Ascending aorta (tissue), 2 donors: ENCODE measurements at regions of chr2 and their contacts with region 1.

Region 1: GRCh38 chr2:197705121-197705911 is at the start of gene MARS2:
- DNase-seq: peak; percentile 62 to 95
- H3K4me3 ChIP-seq: peak within 1 kb of the TSS; percentile 73 to 84
- H3K27ac ChIP-seq: peak within 1 kb of the TSS; percentile 67 to 81
- H3K4me1 ChIP-seq: peaks cover 10 to 21% of the 10 kb centered on the region in 2 donors
- H3K27me3 ChIP-seq: no peaks in the 10 kb centered on the region
- CTCF ChIP-seq: no peak
- total RNA-seq, gene MARS2: 6.5 TPM

Region 2: DNA sequence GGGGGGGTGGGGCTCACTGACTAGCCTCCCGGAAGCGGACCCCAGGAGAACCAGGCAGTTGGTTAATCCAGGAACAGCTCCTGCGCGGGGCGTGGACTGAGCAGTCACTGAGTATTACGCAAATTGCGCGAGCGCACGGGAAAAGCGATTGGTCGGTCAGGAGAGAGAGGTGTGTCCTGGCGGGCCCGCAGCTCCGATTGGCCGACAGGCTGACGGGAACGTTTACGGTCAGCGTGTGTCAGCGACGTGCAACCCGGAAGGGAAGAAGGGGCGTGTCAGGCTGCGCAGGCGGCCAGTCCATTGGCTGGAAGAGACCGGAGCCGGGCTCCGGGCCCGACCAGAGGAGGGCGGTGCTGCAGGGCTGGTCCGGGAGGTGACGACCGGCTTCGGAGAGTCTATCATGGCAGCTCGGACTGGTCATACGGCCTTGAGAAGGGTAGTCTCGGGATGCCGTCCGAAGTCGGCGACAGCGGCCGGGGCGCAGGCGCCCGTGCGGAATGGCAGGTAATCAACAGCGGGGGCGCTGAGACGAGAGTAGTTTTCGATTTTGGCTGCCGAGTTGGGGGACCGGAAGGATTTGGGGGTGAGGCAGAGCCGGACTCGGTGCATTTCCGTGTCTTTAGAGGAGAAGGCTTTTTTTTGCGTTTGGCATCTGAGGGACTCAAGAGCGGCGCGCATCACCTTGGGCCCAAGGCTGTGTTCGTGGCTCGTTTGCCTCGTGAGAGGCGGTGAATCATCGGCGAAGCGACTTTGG is 252.0 kb before region 1 on chr2 and contains the start of gene COQ10B:
- intact Hi-C with region 1: loop called (anchors 1 kb)
- DNase-seq: peak; percentile 98 to 100
- H3K4me3 ChIP-seq: peak within 1 kb of the TSS; percentile 60 to 83
- H3K27ac ChIP-seq: peak within 1 kb of the TSS; percentile 96 to 99
- H3K4me1 ChIP-seq: peaks cover 9 to 19% of the 10 kb centered on the region in 2 donors
- H3K27me3 ChIP-seq: no peaks in the 10 kb centered on the region
- CTCF ChIP-seq: peak in 2 of 3 experiments; percentile 15 to 25
- total RNA-seq, gene COQ10B: 6.0 TPM

Region 3: GRCh38 chr2:197464175-197464574 is 241.1 kb before region 1 on chr2:
- intact Hi-C with region 1: no loop called
- DNase-seq: no peak
- H3K4me3 ChIP-seq: no peak overlapping the region
- H3K27ac ChIP-seq: no peak overlapping the region
- H3K4me1 ChIP-seq: no peaks in the 10 kb centered on the region
- H3K27me3 ChIP-seq: no peaks in the 10 kb centered on the region
- CTCF ChIP-seq: no peak

Region 4: DNA sequence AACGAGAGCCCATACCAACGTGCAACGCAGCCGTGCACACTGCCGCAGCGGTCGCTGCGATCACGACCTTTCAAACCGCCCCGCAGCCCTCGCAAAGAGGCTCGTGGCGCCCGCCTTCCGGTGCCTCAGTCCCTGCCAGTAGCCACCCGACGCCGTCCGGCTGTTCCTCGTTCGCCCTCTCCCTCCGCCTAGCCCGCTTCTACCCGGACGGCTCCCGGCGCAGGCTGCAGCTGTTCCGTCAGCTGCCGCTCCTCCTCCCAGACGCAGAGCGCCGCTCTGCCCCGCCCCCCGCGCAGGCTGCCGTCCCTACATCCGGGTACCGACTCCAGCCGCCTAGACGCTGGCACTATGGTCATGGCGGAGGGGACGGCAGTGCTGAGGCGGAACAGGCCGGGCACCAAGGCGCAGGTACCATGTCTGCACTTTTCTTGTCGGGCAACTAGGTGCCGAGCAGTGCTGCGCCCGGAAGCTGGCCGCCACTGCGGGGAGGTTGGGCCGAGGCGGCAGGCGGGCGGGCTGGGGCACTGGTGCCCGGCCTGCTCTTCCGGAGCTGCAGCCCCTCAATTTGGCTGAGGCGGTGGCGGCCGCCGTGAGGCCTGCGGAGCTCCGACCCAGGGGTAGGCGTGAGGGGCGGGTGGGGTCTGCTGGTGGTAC is 189.4 kb before region 1 on chr2 and contains the start of gene MOB4:
- intact Hi-C with region 1: loop called (anchors 2 kb)
- DNase-seq: peak; percentile 72 to 97
- H3K4me3 ChIP-seq: peak within 1 kb of the TSS; percentile 77 to 84
- H3K27ac ChIP-seq: peak within 1 kb of the TSS; percentile 84 to 95
- H3K4me1 ChIP-seq: peaks cover 0 to 7% of the 10 kb centered on the region in 2 donors
- H3K27me3 ChIP-seq: no peaks in the 10 kb centered on the region
- CTCF ChIP-seq: peak in 1 of 3 experiments; percentile 4
- total RNA-seq, gene MOB4: 29.2 TPM

Region 5: GRCh38 chr2:197777823-197778407 is 72.6 kb after region 1 on chr2:
- intact Hi-C with region 1: loop called (anchors 2 kb)
- DNase-seq: no peak
- H3K4me3 ChIP-seq: no peak overlapping the region
- H3K27ac ChIP-seq: peak overlapping the region in 1 of 2 donors; percentile 9
- H3K4me1 ChIP-seq: peaks cover 0 to 14% of the 10 kb centered on the region in 2 donors
- H3K27me3 ChIP-seq: no peaks in the 10 kb centered on the region
- CTCF ChIP-seq: peak; percentile 59 to 80 (median 75)

Region 6: GRCh38 chr2:198296665-198297308 is 591.5 kb after region 1 on chr2:
- intact Hi-C with region 1: loop called (anchors 2 kb)
- DNase-seq: peak in 1 of 2 donors; percentile 71
- H3K4me3 ChIP-seq: no peak overlapping the region
- H3K27ac ChIP-seq: no peak overlapping the region
- H3K4me1 ChIP-seq: no peaks in the 10 kb centered on the region
- H3K27me3 ChIP-seq: no peaks in the 10 kb centered on the region
- CTCF ChIP-seq: peak; percentile 60 to 88 (median 77)

Region 7: GRCh38 chr2:199459286-199460016 is 1754.1 kb after region 1 on chr2:
- intact Hi-C with region 1: loop called (anchors 10 kb)
- DNase-seq: peak in 1 of 2 donors; percentile 95
- H3K4me3 ChIP-seq: peak overlapping the region; percentile 87 to 98
- H3K27ac ChIP-seq: peak overlapping the region; percentile 85 to 93
- H3K4me1 ChIP-seq: peaks cover 27 to 31% of the 10 kb centered on the region in 2 donors
- H3K27me3 ChIP-seq: peaks cover 21% of the 10 kb centered on the region
- CTCF ChIP-seq: no peak